K562 (cell line): ENCODE measurements at regions of chr16 and their contacts with region 1.

Region 1: DNA sequence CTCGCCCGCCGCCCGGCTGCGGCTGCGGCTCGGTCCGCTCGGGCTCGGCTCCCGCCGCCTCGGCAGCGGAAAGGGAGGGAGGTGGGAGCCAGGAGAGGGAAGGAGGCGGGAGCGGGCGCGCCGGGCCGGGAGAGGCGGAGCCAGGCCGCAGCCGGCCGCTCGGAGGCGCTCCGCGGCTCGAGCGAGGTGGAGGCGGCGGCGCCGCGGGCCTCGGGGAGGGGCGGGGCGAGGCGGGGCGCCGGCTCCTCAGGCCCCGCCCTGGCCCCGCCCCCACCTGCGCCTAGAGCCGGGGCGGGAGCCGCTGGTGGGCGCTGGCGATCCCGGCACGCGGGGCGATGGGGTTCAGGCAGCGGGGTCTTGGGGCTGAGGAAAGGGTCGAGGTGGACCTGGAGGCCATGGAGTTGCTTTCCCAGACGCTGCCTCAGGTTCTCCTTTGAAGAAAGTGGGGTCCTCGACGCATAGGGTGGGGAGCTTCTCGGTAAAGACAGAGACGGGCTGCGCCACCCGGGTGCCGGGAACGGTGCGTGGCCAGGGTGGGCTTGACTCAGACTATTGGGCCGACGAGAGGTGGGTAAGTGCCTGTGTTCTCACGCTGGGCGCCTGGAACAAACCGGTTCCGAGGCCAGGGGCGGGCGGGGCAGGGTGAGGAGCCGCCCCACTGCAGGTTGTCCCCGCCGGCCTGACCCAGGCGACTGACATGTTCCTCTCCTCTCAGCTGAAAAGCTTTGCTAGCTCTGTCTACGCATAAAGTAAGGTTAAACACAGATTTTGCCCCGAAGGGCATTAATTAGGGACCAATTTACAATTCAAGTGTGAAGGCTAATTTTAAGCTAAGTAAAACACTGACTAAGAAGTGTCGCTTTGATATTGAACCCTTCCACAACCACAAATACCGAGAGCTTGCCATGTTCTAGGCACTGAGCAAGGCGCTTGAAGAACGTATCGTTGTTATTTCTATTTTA is at the start of gene CMTM4:
- DNase-seq: peak; percentile 90 to 97 (median 96)
- ATAC-seq: peak; percentile 94
- H3K4me3 ChIP-seq: peak within 1 kb of the TSS; percentile 83
- H3K27ac ChIP-seq: peak within 1 kb of the TSS; percentile 87
- H3K4me1 ChIP-seq: peaks cover 19 to 25% of the 10 kb centered on the region in 2 experiments
- H3K27me3 ChIP-seq: no peaks in the 10 kb centered on the region
- CTCF ChIP-seq: peak; percentile 39 to 53 (median 41); a peak in 4 of 6 replicates
- EP300 ChIP-seq: no peak
- POLR2A ChIP-seq: peak; percentile 73
- RAD21 ChIP-seq: peak in 1 of 2 experiments; percentile 22; a peak in 1 of 4 replicates
- polyA plus RNA-seq, gene CMTM4: 2.0 to 2.3 TPM

Region 2: DNA sequence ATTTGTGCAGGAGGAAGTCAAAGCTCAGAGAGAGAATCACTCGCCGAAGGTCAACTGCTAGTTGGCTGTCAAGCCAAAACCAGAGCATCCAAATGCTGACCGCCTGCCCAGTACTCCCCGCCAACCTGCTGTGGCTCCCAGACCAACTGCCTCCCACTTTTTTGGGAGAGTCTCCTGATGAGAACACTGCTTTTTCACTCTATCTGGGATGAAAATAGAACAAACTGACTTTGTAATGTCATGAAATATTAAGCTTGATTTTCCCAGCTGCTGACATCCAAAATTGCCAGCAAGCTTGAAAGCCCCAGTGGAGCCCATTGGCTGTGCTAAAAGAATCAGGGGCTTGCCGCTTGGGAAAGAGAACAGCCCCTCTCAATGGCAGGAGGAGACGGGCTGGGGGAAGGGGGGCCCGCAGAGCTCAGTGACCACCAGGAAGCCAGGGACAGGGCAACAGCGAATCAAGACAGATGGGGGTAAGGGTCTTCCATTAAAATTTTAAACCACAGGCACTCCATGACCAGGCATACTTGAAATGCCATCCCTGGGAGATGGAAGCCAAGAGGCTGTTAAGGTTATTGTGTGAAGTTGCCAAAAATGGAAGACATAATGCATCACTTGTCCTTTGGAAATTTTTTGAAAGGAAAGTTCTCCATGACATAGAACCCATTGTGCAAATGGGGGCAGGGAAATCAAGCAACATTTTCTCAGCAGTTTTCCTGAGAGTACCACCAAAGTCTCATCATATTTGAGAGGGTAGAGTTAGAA is 456.1 kb before region 1 on chr16:
- CTCF ChIA-PET with region 1: no interaction called
- POLR2A ChIA-PET with region 1: no interaction called
- in situ Hi-C with region 1: no loop called
- intact Hi-C with region 1: no loop called
- DNase-seq: no peak
- ATAC-seq: no peak
- H3K4me3 ChIP-seq: no peak overlapping the region
- H3K27ac ChIP-seq: no peak overlapping the region
- H3K4me1 ChIP-seq: no peaks in the 10 kb centered on the region
- H3K27me3 ChIP-seq: peaks cover 0 to 9% of the 10 kb centered on the region in 2 experiments; a peak in 1 of 5 replicates
- CTCF ChIP-seq: no peak
- EP300 ChIP-seq: no peak
- POLR2A ChIP-seq: no peak
- RAD21 ChIP-seq: no peak

Region 3: DNA sequence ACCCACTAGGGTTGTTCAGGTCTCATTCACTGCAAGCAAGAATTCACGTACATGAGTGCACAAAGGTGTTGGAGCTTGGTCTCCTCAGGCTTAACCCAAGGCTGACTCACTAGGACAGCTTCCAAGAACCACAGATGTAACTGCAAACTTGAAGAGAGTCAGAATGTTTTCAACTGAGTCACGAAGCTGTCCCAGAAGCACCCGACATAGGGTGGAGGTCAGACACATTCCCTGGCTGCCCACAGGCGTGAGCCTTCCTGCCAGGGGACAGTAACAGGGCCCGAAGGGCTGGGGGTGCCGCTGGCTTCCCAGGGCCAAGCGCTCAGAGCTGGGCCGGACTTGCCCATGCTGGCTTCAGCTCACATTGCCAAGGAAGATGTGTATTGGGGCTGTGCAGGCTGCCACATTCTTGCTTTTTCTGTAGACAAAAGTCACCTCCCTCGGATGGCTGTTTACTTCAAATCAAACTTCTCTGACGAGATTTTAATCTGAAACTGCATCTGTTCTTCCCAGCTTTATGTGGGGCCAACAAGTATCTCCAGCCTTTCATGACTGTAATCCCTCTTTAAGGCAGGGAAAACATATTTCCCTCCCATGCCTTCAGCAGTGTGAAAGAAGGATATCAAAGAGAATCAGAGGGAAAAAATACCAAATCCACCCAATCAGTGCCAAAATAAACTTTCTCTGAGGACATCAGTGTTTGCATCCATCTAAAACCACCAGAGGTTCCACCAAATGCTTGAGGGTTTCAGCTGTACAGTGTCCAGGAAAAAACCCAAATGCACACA is 78.2 kb before region 1 on chr16:
- CTCF ChIA-PET with region 1: no interaction called
- POLR2A ChIA-PET with region 1: no interaction called
- in situ Hi-C with region 1: no loop called
- intact Hi-C with region 1: loop called (anchors 5 kb)
- DNase-seq: peak in 1 of 4 experiments; percentile 60
- ATAC-seq: peak; percentile 12
- H3K4me3 ChIP-seq: no peak overlapping the region
- H3K27ac ChIP-seq: peak overlapping the region; percentile 78
- H3K4me1 ChIP-seq: peaks cover 40 to 64% of the 10 kb centered on the region in 2 experiments
- H3K27me3 ChIP-seq: no peaks in the 10 kb centered on the region
- CTCF ChIP-seq: no peak
- EP300 ChIP-seq: no peak
- POLR2A ChIP-seq: no peak
- RAD21 ChIP-seq: no peak

Region 4: DNA sequence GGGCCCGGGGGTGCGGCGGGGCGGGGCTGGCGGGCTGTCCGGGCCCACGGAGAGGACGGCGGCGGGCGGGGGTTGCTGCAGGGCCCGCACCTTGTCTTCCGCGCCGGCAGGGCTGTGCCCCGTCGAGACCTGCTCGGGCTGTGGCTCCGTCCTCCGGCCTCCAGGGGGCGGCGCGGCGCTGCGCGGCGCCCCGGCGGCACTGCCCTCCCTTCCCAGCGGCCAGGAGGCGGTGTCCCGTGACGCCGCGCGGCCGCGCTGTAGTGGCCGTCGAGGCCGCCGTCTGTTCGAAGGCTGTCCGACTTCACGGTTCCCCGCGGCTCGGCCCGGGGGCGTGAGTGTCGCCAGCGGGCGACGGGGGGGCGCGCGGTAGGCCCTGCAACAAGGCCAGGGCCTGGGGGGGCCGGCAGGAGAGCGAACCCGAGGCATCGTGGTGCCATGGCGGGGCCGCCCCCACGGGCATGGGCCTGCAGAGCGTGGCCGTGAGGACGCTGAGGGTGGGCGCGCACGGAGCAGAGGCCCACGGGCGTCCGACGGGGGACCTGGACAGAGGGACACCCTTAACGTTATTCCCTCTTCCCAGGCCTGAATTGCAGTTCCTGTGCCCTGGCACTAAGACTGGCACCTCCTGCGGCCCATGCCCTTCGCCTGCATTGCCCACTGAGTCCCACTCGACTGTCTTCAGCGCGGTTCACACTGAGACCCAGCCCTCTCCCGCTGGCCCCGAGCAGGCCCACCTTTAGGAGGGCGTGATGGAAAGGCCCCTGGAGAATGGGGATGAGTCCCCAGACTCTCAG is 582.5 kb after region 1 on chr16 and contains the start of gene PLEKHG4:
- CTCF ChIA-PET with region 1: no interaction called
- POLR2A ChIA-PET with region 1: no interaction called
- in situ Hi-C with region 1: no loop called
- intact Hi-C with region 1: no loop called
- DNase-seq: peak in 2 of 4 experiments; percentile 91 to 96
- ATAC-seq: peak; percentile 98
- H3K4me3 ChIP-seq: peak within 1 kb of the TSS; percentile 74
- H3K27ac ChIP-seq: peak within 1 kb of the TSS; percentile 83
- H3K4me1 ChIP-seq: peaks cover 22 to 44% of the 10 kb centered on the region in 2 experiments
- H3K27me3 ChIP-seq: no peaks in the 10 kb centered on the region
- CTCF ChIP-seq: peak; percentile 67 to 97 (median 93)
- EP300 ChIP-seq: peak; percentile 8; the same call in 1 of the 2 replicates
- POLR2A ChIP-seq: peak; percentile 69
- RAD21 ChIP-seq: peak; percentile 78 to 88
- polyA plus RNA-seq, gene PLEKHG4: 3.7 to 4.7 TPM